OCI-LY7 (cell line): ENCODE measurements at regions of chr1 and their contacts with region 1.

Region 1: GRCh38 chr1:110460253-110461220 is 9.6 kb downstream of the PROK1 start:
- DNase-seq: peak; percentile 81
- H3K4me3 ChIP-seq: no peak overlapping the region
- H3K27ac ChIP-seq: no peak overlapping the region
- H3K4me1 ChIP-seq: peaks cover 3% of the 10 kb centered on the region
- CTCF ChIP-seq: peak; percentile 96

Region 2: DNA sequence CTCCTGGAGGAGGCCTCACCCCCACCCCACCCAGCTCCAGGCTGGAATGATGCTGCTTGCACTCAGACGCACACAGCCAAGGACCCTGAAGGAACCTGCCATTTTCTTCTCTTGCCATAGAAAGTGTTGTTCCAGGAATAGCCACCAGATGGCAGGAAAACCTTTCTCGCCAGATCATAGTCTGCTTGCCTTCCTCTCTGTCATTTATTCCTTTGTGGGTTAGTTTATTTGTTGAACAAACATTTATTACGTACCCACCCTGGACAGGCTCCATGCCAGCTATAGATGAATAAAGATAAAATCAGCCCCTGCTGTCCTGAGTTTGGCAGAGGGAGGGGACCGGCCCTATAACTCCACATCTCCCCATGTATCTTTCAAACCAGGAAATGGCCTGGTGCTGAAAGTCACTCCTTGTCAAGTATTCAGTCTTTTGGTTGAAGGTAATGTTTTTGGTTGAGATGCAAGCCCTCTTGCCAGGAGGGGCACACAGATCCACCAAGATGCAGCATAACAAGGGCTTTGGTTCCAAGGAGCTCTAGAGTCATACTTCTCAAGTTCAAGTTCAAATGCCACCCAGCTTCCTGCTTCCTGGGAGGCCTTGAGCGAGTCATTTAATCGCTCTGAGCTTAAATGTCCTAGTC is 257.4 kb before region 1 on chr1:
- CTCF ChIA-PET with region 1: interaction called, 22 read pairs
- POLR2A ChIA-PET with region 1: interaction called, 3 read pairs
- intact Hi-C with region 1: loop called (anchors 1 kb)
- DNase-seq: peak; percentile 75
- H3K4me3 ChIP-seq: no peak overlapping the region
- H3K27ac ChIP-seq: no peak overlapping the region
- H3K4me1 ChIP-seq: peaks cover 6% of the 10 kb centered on the region
- CTCF ChIP-seq: peak; percentile 95

Region 3: GRCh38 chr1:110312188-110313121 is 148.1 kb before region 1 on chr1:
- CTCF ChIA-PET with region 1: no interaction called
- POLR2A ChIA-PET with region 1: no interaction called
- intact Hi-C with region 1: loop called (anchors 2 kb)
- DNase-seq: peak; percentile 68
- H3K4me3 ChIP-seq: no peak overlapping the region
- H3K27ac ChIP-seq: no peak overlapping the region
- H3K4me1 ChIP-seq: no peaks in the 10 kb centered on the region
- CTCF ChIP-seq: peak; percentile 87

Region 4: GRCh38 chr1:110412576-110412975 is 48.0 kb before region 1 on chr1:
- CTCF ChIA-PET with region 1: interaction called, 8 read pairs
- POLR2A ChIA-PET with region 1: interaction called, 5 read pairs
- intact Hi-C with region 1: loop called (anchors 1 kb)
- DNase-seq: peak; percentile 84
- H3K4me3 ChIP-seq: no peak overlapping the region
- H3K27ac ChIP-seq: no peak overlapping the region
- H3K4me1 ChIP-seq: peaks cover 23% of the 10 kb centered on the region
- CTCF ChIP-seq: peak; percentile 95

Region 5: DNA sequence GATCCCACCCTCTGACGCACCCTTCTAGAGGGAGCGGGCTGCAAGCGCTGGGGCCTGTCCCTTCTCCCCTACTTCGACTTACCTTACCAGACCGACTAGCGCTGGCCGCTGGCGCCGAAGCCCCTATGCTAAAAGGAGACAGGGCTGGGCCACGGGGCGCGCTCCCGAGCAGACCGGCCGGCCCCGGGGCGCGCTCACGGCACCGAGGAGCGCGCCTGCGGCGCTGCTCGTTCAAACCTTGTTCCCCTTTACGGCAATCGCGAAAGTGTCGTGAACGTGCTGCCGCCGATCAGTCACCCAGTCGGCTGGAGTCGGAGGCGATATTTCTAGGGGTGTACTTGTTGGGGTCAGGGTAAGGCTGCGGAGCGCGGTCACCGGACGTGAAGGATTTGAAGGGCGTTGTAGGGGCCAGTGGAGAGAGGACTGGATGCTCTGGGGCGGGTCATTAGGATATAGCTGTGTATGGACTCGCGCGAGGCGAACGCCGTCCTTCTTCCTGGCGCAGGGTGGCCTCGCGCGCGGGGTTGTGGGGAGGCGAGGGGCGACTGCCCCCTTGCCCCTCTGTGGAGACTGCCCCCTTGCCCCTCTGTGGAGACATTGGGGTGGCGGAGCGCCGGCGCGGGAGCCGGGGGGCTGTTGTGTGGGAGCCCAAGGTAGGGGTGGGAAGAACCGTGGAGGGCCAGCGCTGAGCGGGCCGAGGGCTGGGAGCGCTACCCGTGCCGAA is 679.6 kb after region 1 on chr1 and contains the starts of genes CEPT1 and DRAM2:
- CTCF ChIA-PET with region 1: no interaction called
- POLR2A ChIA-PET with region 1: no interaction called
- intact Hi-C with region 1: no loop called
- DNase-seq: peak; percentile 97
- H3K4me3 ChIP-seq: peak within 1 kb of the TSS; percentile 94
- H3K27ac ChIP-seq: peak within 1 kb of the TSS; percentile 91
- H3K4me1 ChIP-seq: peaks cover 55% of the 10 kb centered on the region
- CTCF ChIP-seq: no peak
- total RNA-seq, gene CEPT1: 41.5 and 44.9 TPM in 2 replicates
- total RNA-seq, gene DRAM2: 75.2 and 84.2 TPM in 2 replicates